PC-9 (cell line): ENCODE measurements at regions of chr14 and their contacts with region 1.

Region 1: GRCh38 chr14:95545179-95546168 is 10.6 kb downstream of the GLRX5 start:
- DNase-seq: peak in 1 of 2 experiments; percentile 81
- H3K4me3 ChIP-seq: no peak overlapping the region
- H3K27ac ChIP-seq: peak overlapping the region; percentile 72
- H3K4me1 ChIP-seq: peaks cover 32% of the 10 kb centered on the region
- H3K27me3 ChIP-seq: no peaks in the 10 kb centered on the region
- CTCF ChIP-seq: no peak

Region 2: GRCh38 chr14:95468448-95469145 is 76.9 kb before region 1 on chr14:
- CTCF ChIA-PET with region 1: no interaction called
- POLR2A ChIA-PET with region 1: no interaction called
- intact Hi-C with region 1: loop called (anchors 5 kb)
- DNase-seq: peak; percentile 27 to 85
- H3K4me3 ChIP-seq: no peak overlapping the region
- H3K27ac ChIP-seq: peak overlapping the region; percentile 78
- H3K4me1 ChIP-seq: peaks cover 23% of the 10 kb centered on the region
- H3K27me3 ChIP-seq: no peaks in the 10 kb centered on the region
- CTCF ChIP-seq: no peak